ENCODE measurements at regions of chr13 and their contacts with region 1.

Region 1: GRCh38 chr13:40813661-40814454 is 24.4 kb downstream of the SLC25A15 start:
- DNase-seq: peak in 1 of 2 experiments; percentile 57
- H3K4me3 ChIP-seq: no peak overlapping the region
- H3K27ac ChIP-seq: no peak overlapping the region
- H3K4me1 ChIP-seq: no peaks in the 10 kb centered on the region
- H3K27me3 ChIP-seq: no peaks in the 10 kb centered on the region
- CTCF ChIP-seq: peak in 2 of 3 experiments; percentile 66 to 74; a peak in 3 of 4 replicates
- EP300 ChIP-seq: no peak
- POLR2A ChIP-seq: no peak
- RAD21 ChIP-seq: peak; percentile 53 to 71

Region 2: DNA sequence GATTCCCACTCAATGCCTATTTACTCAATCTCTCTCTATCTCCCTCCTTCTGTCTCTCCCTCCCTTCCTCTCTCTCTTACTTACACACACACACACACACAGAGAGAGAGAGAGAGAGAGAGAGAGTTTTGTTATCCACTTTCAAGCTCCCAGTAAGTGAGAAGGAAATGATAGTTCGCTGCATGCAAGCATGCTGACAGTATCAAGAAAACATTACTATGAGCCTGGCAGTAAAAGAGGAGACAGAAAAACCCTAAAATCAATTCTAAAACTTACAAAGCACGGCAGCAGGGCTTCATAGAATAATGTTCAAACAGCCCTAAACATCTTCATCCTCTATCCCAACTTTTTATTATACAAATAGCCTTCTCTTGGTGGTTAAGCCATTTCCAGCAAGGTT is 319.3 kb before region 1 on chr13:
- CTCF ChIA-PET with region 1: no interaction called
- POLR2A ChIA-PET with region 1: no interaction called
- DNase-seq: no peak
- H3K4me3 ChIP-seq: no peak overlapping the region
- H3K27ac ChIP-seq: no peak overlapping the region
- H3K4me1 ChIP-seq: peaks cover 0 to 3% (median 0%) of the 10 kb centered on the region in 4 experiments; a peak in 1 of 7 replicates
- H3K27me3 ChIP-seq: no peaks in the 10 kb centered on the region; a peak in 1 of 7 replicates
- CTCF ChIP-seq: no peak
- EP300 ChIP-seq: no peak
- POLR2A ChIP-seq: no peak
- RAD21 ChIP-seq: no peak

Region 3: DNA sequence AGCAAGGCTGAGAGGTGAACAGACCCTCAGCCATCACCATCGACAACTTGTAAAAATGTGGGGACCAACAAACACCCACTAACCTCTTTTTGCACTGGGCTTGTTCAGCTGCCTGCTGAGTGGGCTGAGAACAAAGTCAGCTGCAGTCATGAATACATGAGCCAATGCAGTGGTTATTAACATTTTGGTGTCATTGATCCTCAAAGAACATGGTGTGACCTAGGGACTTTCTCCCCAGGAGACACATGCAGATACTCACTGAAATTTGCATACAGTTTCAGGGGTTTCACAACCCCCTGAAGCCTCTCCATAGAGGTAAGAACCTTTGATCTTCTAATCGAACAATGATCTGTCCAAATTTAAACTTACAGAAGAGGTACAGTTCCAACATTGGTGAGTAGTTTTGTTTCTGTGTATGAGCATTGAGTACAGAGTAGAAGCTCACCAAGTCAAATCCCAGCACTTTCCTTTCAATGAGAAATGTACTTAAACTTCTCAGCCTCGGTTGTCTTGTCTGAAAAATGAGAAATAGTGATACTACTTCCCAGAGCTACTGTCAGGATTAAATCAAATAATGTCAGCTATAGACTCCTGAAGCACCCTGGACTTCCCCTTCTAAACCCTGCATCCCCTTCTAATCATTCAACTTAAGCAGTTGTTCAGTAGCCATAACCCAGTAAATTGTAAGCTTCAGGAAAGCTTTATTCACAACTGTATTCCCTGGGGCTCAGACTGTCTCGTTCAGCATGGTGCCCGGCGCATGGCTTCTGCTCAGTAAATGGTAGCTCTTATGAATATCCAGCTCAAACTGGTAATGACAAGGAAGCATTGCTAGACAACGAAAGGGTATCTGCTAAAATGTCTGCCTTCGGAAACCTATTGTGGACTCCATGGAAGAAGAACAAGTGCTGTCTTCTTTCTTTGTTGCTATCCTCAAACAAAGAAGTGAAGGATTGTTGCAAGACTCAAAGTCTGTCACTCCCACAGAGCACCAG is 296.1 kb before region 1 on chr13:
- CTCF ChIA-PET with region 1: no interaction called
- POLR2A ChIA-PET with region 1: no interaction called
- DNase-seq: peak in 1 of 2 experiments; percentile 22
- H3K4me3 ChIP-seq: no peak overlapping the region
- H3K27ac ChIP-seq: no peak overlapping the region
- H3K4me1 ChIP-seq: no peaks in the 10 kb centered on the region
- H3K27me3 ChIP-seq: peaks cover 0 to 1% (median 0%) of the 10 kb centered on the region in 4 experiments; a peak in 1 of 7 replicates
- CTCF ChIP-seq: no peak
- EP300 ChIP-seq: no peak
- POLR2A ChIP-seq: no peak
- RAD21 ChIP-seq: no peak

Region 4: DNA sequence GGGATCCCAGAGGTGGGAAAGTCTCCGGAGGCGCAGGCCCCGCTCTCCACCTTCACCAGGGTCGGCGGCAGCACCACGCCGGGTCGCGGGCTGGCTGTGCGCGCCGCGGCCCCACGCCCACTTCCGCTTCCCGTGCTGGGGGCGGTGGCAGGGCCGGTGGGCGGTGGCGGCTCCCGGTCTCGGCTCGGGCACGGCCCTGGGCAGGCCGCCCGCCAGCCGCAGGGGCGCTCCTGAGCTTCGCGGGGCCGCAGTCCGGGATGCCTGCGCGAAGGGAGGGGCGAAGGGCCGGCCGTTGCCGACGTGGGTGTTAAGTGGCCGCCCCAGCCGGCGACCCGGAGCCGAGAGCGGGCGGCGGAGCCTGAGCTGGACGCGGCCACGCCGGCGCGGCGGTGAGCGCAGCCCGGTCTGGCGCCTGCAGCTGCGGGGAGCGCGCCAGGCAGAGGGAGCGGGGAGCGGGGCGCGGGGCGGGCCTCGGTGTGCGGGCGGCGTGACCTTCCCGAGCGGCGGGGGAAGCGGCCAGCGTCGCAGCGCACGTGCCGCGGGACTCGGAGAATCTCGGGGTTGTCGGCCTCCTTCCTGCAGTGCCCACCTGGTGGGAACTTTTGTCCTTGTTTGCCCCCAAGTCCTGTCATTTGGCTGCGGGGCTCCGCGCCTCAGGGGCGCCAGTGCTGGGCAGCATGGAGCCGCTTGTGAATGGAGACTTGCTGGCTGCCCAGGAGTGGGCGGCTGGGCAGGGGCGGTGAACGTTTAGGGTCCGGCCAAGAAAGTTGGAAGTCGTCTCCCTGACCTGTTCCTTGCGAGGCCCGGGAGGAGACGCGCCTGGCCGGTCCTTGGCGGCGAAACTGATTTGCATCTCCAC is 24.4 kb before region 1 on chr13 and contains the start of gene SLC25A15:
- CTCF ChIA-PET with region 1: interaction called, 12 read pairs
- POLR2A ChIA-PET with region 1: interaction called, 3 read pairs
- DNase-seq: peak in 1 of 2 experiments; percentile 81
- H3K4me3 ChIP-seq: peak within 1 kb of the TSS; percentile 64 to 74 (median 68)
- H3K27ac ChIP-seq: peak within 1 kb of the TSS; percentile 60; the same call in 1 of the 2 replicates
- H3K4me1 ChIP-seq: peaks cover 0 to 4% (median under 1%) of the 10 kb centered on the region in 4 experiments; a peak in 1 of 7 replicates
- H3K27me3 ChIP-seq: no peaks in the 10 kb centered on the region
- CTCF ChIP-seq: peak in 2 of 3 experiments; percentile 31 to 33; a peak in 3 of 4 replicates
- EP300 ChIP-seq: no peak
- POLR2A ChIP-seq: peak in 1 of 2 experiments; percentile 66; a peak in 2 of 3 replicates
- RAD21 ChIP-seq: peak in 1 of 2 experiments; percentile 30; a peak in 1 of 4 replicates
- total RNA-seq, gene SLC25A15: 22.1 and 23.4 TPM in 2 replicates

Region 5: GRCh38 chr13:41004875-41005693 is 191.2 kb after region 1 on chr13:
- CTCF ChIA-PET with region 1: no interaction called
- POLR2A ChIA-PET with region 1: no interaction called
- DNase-seq: no peak
- H3K4me3 ChIP-seq: no peak overlapping the region
- H3K27ac ChIP-seq: no peak overlapping the region
- H3K4me1 ChIP-seq: peaks cover 0 to 5% (median 0%) of the 10 kb centered on the region in 4 experiments; a peak in 3 of 7 replicates
- H3K27me3 ChIP-seq: no peaks in the 10 kb centered on the region
- CTCF ChIP-seq: no peak
- EP300 ChIP-seq: no peak
- POLR2A ChIP-seq: no peak
- RAD21 ChIP-seq: no peak